Activated B cell treated with CpG ODN at 0.5 μM for 24 hours (primary cell): ENCODE measurements at regions of chr10 and their contacts with region 1.

Region 1: GRCh38 chr10:119596537-119597404 is at the start of gene TIAL1:
- DNase-seq: peak; percentile 84
- ATAC-seq: peak; percentile 84
- H3K4me3 Mint-ChIP-seq: peak within 1 kb of the TSS; percentile 95
- H3K27ac Mint-ChIP-seq: peak within 1 kb of the TSS; percentile 97
- H3K4me1 Mint-ChIP-seq: peaks cover 54% of the 10 kb centered on the region
- H3K27me3 Mint-ChIP-seq: no peaks in the 10 kb centered on the region
- CTCF ChIP-seq: no peak
- total RNA-seq, gene TIAL1: 142 and 155 TPM in 2 replicates

Region 2: DNA sequence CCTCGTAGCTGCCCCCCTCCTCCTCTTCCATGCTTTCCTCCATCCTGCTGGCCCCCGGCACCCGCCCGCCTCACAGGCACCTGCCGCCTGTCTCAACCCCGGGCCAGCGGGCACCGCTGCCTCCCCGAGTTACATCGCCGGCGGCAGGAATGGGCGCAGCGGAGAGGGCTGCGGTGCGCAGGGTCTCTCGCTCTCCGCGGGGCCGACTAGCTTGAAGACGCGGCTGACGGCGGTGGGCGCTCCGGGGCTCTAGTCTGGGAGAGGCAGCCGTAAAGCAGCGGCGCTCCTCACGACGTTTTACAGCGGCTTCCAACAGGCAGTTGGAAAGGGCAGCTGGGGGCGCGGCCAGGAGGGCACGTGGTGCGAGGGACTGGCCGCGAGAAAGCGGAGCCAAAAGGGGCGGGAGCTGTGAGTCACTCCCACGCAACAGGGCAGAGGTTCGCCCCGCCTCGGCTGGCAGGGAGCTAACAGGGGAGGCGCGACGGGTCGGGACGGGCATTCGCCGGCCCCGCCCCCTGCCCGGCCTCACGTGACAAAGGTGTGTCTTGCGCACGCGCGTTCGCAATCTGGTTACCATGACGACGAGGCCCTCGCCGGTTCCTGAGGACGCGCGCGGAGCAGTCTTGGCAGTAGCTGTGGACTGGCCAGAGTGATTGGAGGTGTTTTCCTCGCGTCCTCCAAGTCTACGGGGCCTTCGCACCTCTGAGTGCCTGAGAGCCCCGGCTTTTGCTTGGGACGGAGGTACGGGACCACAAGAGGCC is 841.9 kb before region 1 on chr10 and contains the start of gene CACUL1:
- CTCF ChIA-PET with region 1: no interaction called
- POLR2A ChIA-PET with region 1: interaction called, 4 read pairs
- intact Hi-C with region 1: loop called (anchors 1 kb)
- DNase-seq: peak; percentile 99
- ATAC-seq: peak; percentile 98
- H3K4me3 Mint-ChIP-seq: peak within 1 kb of the TSS; percentile 91
- H3K27ac Mint-ChIP-seq: peak within 1 kb of the TSS; percentile 78
- H3K4me1 Mint-ChIP-seq: peaks cover 38% of the 10 kb centered on the region
- H3K27me3 Mint-ChIP-seq: peaks cover 3% of the 10 kb centered on the region
- CTCF ChIP-seq: no peak
- total RNA-seq, gene CACUL1: 19.8 and 27.1 TPM in 2 replicates

Region 3: DNA sequence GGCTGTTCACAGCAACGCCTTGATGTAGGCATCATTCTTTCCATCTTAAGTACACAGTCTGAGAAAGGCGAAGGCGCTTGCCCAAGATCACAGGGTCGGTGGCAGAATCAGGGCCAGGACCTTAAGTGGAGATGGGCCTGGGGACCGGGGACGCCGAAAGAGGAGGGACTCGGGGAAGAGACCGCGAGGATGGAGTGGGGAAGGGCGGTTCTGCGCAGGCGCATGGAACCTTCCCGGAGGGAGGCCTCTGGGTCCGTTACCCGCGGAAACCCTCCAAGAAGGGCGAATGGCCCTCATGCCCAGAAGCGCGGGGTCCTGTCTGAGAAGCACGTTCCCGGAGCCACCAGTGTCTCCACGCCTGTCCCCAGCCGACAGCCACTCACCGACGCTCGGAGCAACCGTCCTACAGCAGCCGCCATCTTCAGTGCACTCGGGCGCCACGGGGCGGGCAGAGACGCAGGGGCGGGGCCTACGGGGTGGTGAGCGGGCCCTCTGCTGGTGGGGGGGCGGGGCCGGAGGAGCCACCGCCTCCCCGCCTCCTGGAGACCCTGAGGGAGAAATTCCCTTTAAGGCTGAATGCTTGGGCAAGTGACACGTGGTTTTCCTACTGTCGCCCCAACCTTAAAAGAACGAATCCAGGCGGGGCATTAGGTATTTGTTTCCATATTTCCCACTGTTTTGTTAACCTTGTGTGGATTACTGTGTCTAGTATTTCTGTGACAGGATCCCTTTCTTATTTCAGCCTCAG is 418.2 kb before region 1 on chr10 and contains the start of gene PRDX3:
- CTCF ChIA-PET with region 1: no interaction called
- POLR2A ChIA-PET with region 1: no interaction called
- intact Hi-C with region 1: loop called (anchors 2 kb)
- DNase-seq: peak; percentile 92
- ATAC-seq: peak; percentile 99
- H3K4me3 Mint-ChIP-seq: peak within 1 kb of the TSS; percentile 98
- H3K27ac Mint-ChIP-seq: peak within 1 kb of the TSS; percentile 93
- H3K4me1 Mint-ChIP-seq: peaks cover 26% of the 10 kb centered on the region
- H3K27me3 Mint-ChIP-seq: no peaks in the 10 kb centered on the region
- CTCF ChIP-seq: no peak
- total RNA-seq, gene PRDX3: 62.8 and 63.7 TPM in 2 replicates

Region 4: DNA sequence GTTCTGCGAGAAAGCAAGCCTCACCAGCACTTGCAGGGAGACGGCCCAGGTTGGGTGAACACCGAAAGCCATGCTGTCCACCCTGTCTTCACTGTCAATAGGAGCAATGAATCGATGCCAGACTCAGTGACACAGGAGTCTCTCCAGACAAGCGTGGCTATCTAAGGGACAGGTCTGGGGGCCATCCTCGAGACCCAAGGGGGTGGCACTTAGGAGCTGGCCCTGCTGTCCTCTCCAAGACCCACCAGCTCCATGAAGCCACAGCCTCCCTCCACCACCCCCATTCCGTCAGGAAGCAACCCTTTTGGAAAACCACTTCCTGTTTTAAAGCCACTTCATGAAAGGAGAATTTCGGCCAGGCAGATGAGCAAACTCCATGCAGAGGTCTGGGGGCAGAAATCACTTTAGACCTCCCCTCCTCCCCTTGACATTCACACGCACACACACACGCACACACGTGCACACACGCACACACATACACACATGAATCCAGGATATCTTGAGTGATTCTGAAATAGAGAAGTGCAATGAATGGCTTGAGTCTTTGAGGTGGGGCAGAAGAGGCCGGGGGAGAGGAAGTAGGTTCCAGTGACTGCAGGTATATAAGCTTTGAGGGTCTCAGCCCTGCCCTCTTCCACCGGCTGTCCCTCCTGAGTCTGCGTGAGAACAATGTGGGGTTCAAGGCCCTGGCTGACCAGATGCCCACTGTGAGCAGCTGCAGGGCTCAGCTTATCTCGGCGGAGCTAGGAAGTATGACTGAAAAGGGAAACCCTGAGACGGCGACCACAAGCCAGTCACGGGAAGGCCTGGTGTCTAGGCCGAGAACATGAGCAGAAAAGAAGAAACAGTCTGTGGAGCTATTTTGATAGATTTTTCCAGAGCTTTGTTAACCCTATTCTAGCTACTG is 79.3 kb before region 1 on chr10:
- CTCF ChIA-PET with region 1: no interaction called
- POLR2A ChIA-PET with region 1: interaction called, 19 read pairs
- intact Hi-C with region 1: loop called (anchors 1 kb)
- DNase-seq: peak; percentile 59
- ATAC-seq: peak; percentile 71
- H3K4me3 Mint-ChIP-seq: peak overlapping the region; percentile 67
- H3K27ac Mint-ChIP-seq: peak overlapping the region; percentile 94
- H3K4me1 Mint-ChIP-seq: peaks cover 34% of the 10 kb centered on the region
- H3K27me3 Mint-ChIP-seq: no peaks in the 10 kb centered on the region
- CTCF ChIP-seq: no peak

Region 5: GRCh38 chr10:119725828-119726675 is 129.3 kb after region 1 on chr10 and contains the start of gene INPP5F:
- CTCF ChIA-PET with region 1: no interaction called
- POLR2A ChIA-PET with region 1: interaction called, 5 read pairs
- intact Hi-C with region 1: loop called (anchors 1 kb)
- DNase-seq: peak; percentile 96
- ATAC-seq: peak; percentile 92
- H3K4me3 Mint-ChIP-seq: peak within 1 kb of the TSS; percentile 92
- H3K27ac Mint-ChIP-seq: peak within 1 kb of the TSS; percentile 81
- H3K4me1 Mint-ChIP-seq: peaks cover 57% of the 10 kb centered on the region
- H3K27me3 Mint-ChIP-seq: no peaks in the 10 kb centered on the region
- CTCF ChIP-seq: no peak
- total RNA-seq, gene INPP5F: 45.9 and 53.5 TPM in 2 replicates

Region 6: GRCh38 chr10:119892188-119893065 is 295.7 kb after region 1 on chr10 and contains the start of gene SEC23IP:
- CTCF ChIA-PET with region 1: no interaction called
- POLR2A ChIA-PET with region 1: interaction called, 4 read pairs
- intact Hi-C with region 1: loop called (anchors 1 kb)
- DNase-seq: peak; percentile 84
- ATAC-seq: peak; percentile 98
- H3K4me3 Mint-ChIP-seq: peak within 1 kb of the TSS; percentile 94
- H3K27ac Mint-ChIP-seq: peak within 1 kb of the TSS; percentile 95
- H3K4me1 Mint-ChIP-seq: peaks cover 42% of the 10 kb centered on the region
- H3K27me3 Mint-ChIP-seq: no peaks in the 10 kb centered on the region
- CTCF ChIP-seq: no peak
- total RNA-seq, gene SEC23IP: 73.8 and 79.9 TPM in 2 replicates

Region 7: GRCh38 chr10:120172356-120172755 is 575.6 kb after region 1 on chr10:
- CTCF ChIA-PET with region 1: no interaction called
- POLR2A ChIA-PET with region 1: no interaction called
- intact Hi-C with region 1: no loop called
- DNase-seq: no peak
- ATAC-seq: no peak
- H3K4me3 Mint-ChIP-seq: no peak overlapping the region
- H3K27ac Mint-ChIP-seq: no peak overlapping the region
- H3K4me1 Mint-ChIP-seq: no peaks in the 10 kb centered on the region
- H3K27me3 Mint-ChIP-seq: peaks cover 8% of the 10 kb centered on the region
- CTCF ChIP-seq: no peak